Right cardiac atrium (tissue), 5 donors: ENCODE measurements at regions of chr1 and their contacts with region 1.

Region 1: DNA sequence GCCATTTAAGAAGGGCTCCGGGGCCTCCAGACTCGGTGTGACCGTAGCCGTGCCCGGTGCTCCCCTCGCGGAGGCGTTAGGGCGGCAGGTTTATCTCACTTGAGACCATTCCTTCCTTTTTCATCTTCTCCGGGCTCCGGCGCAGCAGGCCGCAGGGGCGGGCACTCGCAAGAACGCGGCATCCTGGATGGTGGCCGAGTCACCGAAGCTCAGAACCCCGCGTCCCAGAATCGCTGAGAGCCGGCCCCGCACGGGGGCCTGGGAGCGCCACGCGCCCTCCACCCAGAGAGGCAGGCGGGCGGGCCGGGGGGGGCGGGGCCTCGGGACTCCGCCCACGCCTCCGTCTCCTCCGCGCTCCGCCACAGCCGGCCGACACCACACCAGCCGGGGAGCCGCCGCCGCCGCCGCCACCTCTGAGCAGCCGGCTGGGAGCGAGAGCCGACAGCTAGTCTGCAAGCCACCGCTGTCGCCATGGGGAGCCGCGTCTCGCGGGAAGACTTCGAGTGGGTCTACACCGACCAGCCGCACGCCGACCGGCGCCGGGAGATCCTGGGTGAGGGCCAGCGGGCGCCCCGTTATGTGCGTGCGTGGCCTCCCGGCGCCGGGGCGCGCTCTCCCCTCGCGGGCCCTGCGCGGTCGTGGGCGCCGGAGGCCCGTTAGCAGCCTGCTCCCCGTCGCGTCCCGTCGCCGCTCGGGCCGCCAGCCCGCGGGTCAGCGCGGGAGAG is at the start of gene DEGS1:
- DNase-seq: peak; percentile 80 to 93 (median 92)
- ATAC-seq: peak; percentile 96 to 97
- H3K4me3 ChIP-seq: peak within 1 kb of the TSS; percentile 80
- H3K27ac ChIP-seq: peak within 1 kb of the TSS; percentile 94
- H3K4me1 ChIP-seq: peaks cover 6% of the 10 kb centered on the region
- H3K27me3 ChIP-seq: no peaks in the 10 kb centered on the region
- total RNA-seq, gene DEGS1: 69.3 to 79.6 (median 74.4) TPM

Region 2: DNA sequence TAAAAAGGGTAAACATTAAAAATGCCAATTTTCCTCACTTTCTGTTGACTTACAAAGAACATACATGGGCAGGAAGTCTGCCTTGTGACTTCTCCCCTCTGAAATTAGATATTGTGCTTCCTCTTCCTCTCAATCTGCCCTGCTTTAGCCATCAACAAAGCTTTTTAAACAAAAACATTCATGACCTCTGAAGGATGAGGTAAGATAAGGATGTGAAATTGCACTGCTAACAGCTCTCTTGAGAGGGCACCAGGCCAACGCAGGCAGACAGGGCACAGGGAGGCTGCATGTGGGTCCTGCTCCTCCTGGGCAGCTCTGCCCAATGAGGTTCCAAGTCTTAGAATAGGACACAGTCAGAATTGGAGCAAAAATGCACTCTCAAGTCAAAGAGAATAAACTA is 62.2 kb after region 1 on chr1:
- intact Hi-C with region 1: loop called in 1 of 4 experiments (anchors 10 kb)
- DNase-seq: peak; percentile 62 to 88 (median 87)
- ATAC-seq: peak; percentile 94 to 97
- H3K4me3 ChIP-seq: no peak overlapping the region
- H3K27ac ChIP-seq: no peak overlapping the region
- H3K4me1 ChIP-seq: no peaks in the 10 kb centered on the region
- H3K27me3 ChIP-seq: no peaks in the 10 kb centered on the region

Region 3: DNA sequence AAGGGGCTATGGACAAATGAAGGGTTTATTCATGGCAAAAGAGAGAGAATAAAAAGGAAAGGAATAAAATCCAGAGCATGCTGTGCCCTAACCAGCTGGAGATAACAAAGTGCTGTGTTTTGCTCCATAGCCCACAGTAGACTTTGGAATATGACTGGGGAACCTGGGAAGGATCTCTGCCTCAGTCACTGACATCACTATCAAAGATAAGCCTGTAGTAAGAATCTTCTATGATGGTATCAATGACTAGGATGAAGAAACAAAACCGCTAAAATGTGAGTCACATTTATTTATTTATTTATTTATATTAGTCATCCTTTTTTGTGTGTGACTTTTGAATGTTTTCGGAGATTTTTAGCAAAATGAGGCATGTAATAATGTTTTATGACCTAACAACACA is 90.6 kb after region 1 on chr1:
- intact Hi-C with region 1: no loop called
- DNase-seq: no peak
- ATAC-seq: no peak
- H3K4me3 ChIP-seq: no peak overlapping the region
- H3K27ac ChIP-seq: no peak overlapping the region
- H3K4me1 ChIP-seq: no peaks in the 10 kb centered on the region
- H3K27me3 ChIP-seq: no peaks in the 10 kb centered on the region

Region 4: GRCh38 chr1:224380003-224380402 is 197.0 kb after region 1 on chr1:
- intact Hi-C with region 1: no loop called
- DNase-seq: no peak
- ATAC-seq: peak; percentile 47 to 56
- H3K4me3 ChIP-seq: no peak overlapping the region
- H3K27ac ChIP-seq: no peak overlapping the region
- H3K4me1 ChIP-seq: no peaks in the 10 kb centered on the region
- H3K27me3 ChIP-seq: no peaks in the 10 kb centered on the region